ENCODE measurements at regions of chr17 and their contacts with region 1.

Region 1: GRCh38 chr17:45135192-45135977 is at the start of gene ACBD4:
- DNase-seq: peak; percentile 95 to 96
- H3K4me3 ChIP-seq: peak within 1 kb of the TSS; percentile 70
- H3K27ac ChIP-seq: no peak within 1 kb of the TSS
- H3K4me1 ChIP-seq: peaks cover 22% of the 10 kb centered on the region
- H3K27me3 ChIP-seq: no peaks in the 10 kb centered on the region
- CTCF ChIP-seq: peak; percentile 100
- total RNA-seq, gene ACBD4: 14.6 and 19.5 TPM in 2 replicates

Region 2: DNA sequence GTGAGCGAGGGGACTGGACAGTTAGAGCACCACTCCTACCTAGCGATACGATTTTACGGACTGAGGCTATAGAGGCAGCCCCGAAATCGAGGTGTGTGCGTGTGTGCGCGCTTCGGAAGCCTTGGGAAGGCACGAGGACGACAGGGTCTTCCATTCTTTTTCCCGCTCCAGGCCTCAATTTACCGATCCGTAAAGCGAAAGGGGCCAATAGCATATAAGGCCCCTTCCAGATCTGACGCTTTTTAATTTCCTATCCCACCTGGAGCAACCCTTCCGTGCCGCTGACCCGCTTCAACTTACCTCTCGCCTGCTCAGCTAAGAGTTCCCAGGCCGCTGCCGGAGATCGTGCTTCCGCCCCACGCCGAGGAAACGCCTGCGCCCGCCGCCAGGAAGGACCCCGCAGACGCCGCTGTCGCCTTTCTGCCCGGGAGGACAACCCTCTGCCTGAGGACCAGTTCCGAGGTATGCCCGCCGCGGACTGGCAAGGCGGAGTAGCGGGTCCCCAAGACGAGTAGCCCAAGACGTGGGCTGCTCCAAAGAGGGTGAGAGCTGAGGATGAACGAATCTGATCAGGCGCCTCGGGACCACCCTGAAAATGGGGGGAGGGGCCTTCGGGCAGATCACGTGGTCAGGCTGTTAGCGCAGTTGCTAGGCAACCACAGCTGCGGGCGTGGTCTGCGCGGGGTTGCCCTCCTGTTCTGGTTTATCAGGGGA is 236.2 kb before region 1 on chr17 and contains the start of gene EFTUD2:
- CTCF ChIA-PET with region 1: interaction called, 12 read pairs
- POLR2A ChIA-PET with region 1: interaction called, 3 read pairs
- intact Hi-C with region 1: loop called (anchors 5 kb)
- DNase-seq: peak; percentile 71 to 89
- H3K4me3 ChIP-seq: peak within 1 kb of the TSS; percentile 83
- H3K27ac ChIP-seq: peak within 1 kb of the TSS; percentile 91
- H3K4me1 ChIP-seq: peaks cover 38% of the 10 kb centered on the region
- H3K27me3 ChIP-seq: no peaks in the 10 kb centered on the region
- CTCF ChIP-seq: no peak
- total RNA-seq, gene EFTUD2: 111 and 126 TPM in 2 replicates

Region 3: GRCh38 chr17:44968226-44969143 is 166.9 kb before region 1 on chr17 and contains the start of gene C1QL1:
- CTCF ChIA-PET with region 1: interaction called, 21 read pairs
- POLR2A ChIA-PET with region 1: no interaction called
- intact Hi-C with region 1: no loop called
- DNase-seq: peak; percentile 63 to 89
- H3K4me3 ChIP-seq: peak within 1 kb of the TSS; percentile 47
- H3K27ac ChIP-seq: no peak within 1 kb of the TSS
- H3K4me1 ChIP-seq: no peaks in the 10 kb centered on the region
- H3K27me3 ChIP-seq: peaks cover 17% of the 10 kb centered on the region; the same call in 1 of the 2 replicates
- CTCF ChIP-seq: no peak
- total RNA-seq, gene C1QL1: 0.93 and 1.3 TPM in 2 replicates

Region 4: GRCh38 chr17:45148183-45149036 is 13.0 kb after region 1 on chr17 and contains the start of gene HEXIM1:
- CTCF ChIA-PET with region 1: interaction called, 46 read pairs
- POLR2A ChIA-PET with region 1: interaction called, 11 read pairs
- intact Hi-C with region 1: no loop called
- DNase-seq: peak; percentile 98
- H3K4me3 ChIP-seq: peak within 1 kb of the TSS; percentile 86
- H3K27ac ChIP-seq: peak within 1 kb of the TSS; percentile 92
- H3K4me1 ChIP-seq: peaks cover 27% of the 10 kb centered on the region
- H3K27me3 ChIP-seq: no peaks in the 10 kb centered on the region
- CTCF ChIP-seq: no peak
- total RNA-seq, gene HEXIM1: 49.3 and 64.9 TPM in 2 replicates

Region 5: GRCh38 chr17:45172454-45173286 is 37.3 kb after region 1 on chr17:
- CTCF ChIA-PET with region 1: interaction called, 12 read pairs
- POLR2A ChIA-PET with region 1: interaction called, 9 read pairs
- intact Hi-C with region 1: no loop called
- DNase-seq: peak; percentile 97
- H3K4me3 ChIP-seq: peak overlapping the region; percentile 60
- H3K27ac ChIP-seq: peak overlapping the region; percentile 95
- H3K4me1 ChIP-seq: peaks cover 93% of the 10 kb centered on the region
- H3K27me3 ChIP-seq: no peaks in the 10 kb centered on the region
- CTCF ChIP-seq: no peak; the same call in 1 of the 2 replicates

Region 6: GRCh38 chr17:45228763-45229539 is 93.6 kb after region 1 on chr17:
- CTCF ChIA-PET with region 1: interaction called, 31 read pairs
- POLR2A ChIA-PET with region 1: no interaction called
- intact Hi-C with region 1: no loop called
- DNase-seq: peak; percentile 65 to 68
- H3K4me3 ChIP-seq: peak overlapping the region; percentile 3; the same call in 1 of the 2 replicates
- H3K27ac ChIP-seq: peak overlapping the region; percentile 22
- H3K4me1 ChIP-seq: peaks cover 55% of the 10 kb centered on the region
- H3K27me3 ChIP-seq: no peaks in the 10 kb centered on the region
- CTCF ChIP-seq: no peak

Region 7: GRCh38 chr17:45385331-45385997 is 250.1 kb after region 1 on chr17:
- CTCF ChIA-PET with region 1: no interaction called
- POLR2A ChIA-PET with region 1: interaction called, 4 read pairs
- intact Hi-C with region 1: loop called (anchors 2 kb)
- DNase-seq: peak; percentile 65 to 85
- H3K4me3 ChIP-seq: no peak overlapping the region
- H3K27ac ChIP-seq: no peak overlapping the region
- H3K4me1 ChIP-seq: peaks cover 22% of the 10 kb centered on the region
- H3K27me3 ChIP-seq: no peaks in the 10 kb centered on the region
- CTCF ChIP-seq: peak; percentile 100

Measured in PC-9 (cell line).